ENCODE measurements at regions of chr2 and their contacts with region 1.

Region 1: DNA sequence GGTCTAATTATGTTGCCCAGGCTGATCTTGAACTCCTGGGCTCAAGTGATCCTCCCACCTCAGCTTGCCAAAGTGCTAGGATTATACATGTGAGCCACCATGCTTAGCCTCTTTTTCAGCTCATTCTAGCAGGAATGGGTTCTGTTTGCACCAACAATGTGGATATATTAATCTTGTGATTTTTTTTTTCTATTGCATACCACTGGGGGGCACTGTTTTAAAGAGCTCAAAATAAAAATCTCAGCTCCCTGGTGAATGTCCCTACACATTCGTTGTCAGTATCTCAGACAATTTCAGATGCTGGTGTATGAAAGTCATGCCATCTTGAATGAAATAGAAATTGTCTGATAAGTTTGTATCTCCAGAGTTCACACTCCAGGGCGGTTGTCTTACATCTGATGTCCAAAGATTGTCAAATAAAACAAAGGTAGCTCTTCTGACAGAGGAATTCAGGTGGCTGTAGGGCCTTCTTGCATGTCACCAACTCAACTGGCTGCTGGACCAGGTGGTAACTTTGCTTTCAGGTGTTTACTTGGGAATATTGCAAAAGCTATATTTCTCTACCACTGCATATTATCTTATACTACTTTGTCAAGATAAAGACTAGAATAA is 3.1 kb upstream of the MATN3 start:
- DNase-seq: peak; percentile 75
- ATAC-seq: no peak
- H3K4me3 ChIP-seq: no peak overlapping the region
- H3K27ac ChIP-seq: no peak overlapping the region
- H3K4me1 ChIP-seq: peaks cover 57% of the 10 kb centered on the region
- H3K27me3 ChIP-seq: no peaks in the 10 kb centered on the region; a peak in 1 of 5 replicates
- CTCF ChIP-seq: peak; percentile 73
- EP300 ChIP-seq: no peak
- POLR2A ChIP-seq: no peak
- RAD21 ChIP-seq: peak; percentile 70

Region 2: GRCh38 chr2:19955544-19956422 is 59.8 kb before region 1 on chr2:
- CTCF ChIA-PET with region 1: interaction called, 12 read pairs
- POLR2A ChIA-PET with region 1: no interaction called
- in situ Hi-C with region 1: no loop called
- intact Hi-C with region 1: loop called (anchors 1 kb)
- DNase-seq: peak; percentile 79
- ATAC-seq: peak; percentile 99
- H3K4me3 ChIP-seq: no peak overlapping the region
- H3K27ac ChIP-seq: no peak overlapping the region
- H3K4me1 ChIP-seq: no peaks in the 10 kb centered on the region
- H3K27me3 ChIP-seq: no peaks in the 10 kb centered on the region
- CTCF ChIP-seq: peak; percentile 92
- EP300 ChIP-seq: no peak
- POLR2A ChIP-seq: no peak
- RAD21 ChIP-seq: peak; percentile 92

Region 3: DNA sequence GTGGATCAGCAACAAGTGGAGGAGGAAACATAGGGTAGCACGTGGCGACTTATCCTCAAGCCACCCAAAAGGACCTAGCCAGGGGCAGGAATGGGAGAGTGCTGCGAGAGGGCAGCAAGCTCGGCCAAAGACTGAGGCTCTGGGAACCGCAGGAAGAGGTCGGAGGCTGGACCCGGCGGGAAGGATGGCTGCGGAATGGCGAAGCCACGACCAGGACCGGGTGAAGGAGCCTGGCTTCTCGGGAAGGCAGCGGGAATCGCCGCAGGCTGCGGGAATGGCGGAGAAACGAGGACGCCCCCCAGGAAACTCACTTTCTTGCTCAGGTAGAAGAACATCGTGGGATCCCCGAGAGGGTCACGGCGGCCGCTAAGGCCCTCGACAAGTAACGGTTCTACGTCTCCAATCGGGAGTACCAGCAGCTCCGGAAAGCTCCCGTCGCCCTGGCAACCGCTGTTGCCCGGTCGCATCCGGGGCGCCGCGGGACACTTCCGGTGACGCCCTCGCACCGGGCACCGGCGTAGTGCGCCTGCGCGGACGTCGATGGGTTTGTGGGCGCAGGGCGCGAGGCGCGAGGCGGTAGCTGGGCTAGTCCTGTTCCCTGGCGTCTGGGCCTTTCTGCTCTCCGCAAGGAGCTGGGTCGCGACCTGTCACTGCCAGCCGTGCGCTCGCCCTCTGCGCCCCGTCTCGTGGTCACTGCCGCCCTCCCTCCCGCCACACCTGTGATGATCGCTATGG is 25.7 kb before region 1 on chr2 and contains the start of gene WDR35:
- CTCF ChIA-PET with region 1: no interaction called
- POLR2A ChIA-PET with region 1: interaction called, 10 read pairs
- in situ Hi-C with region 1: no loop called
- intact Hi-C with region 1: loop called (anchors 1 kb)
- DNase-seq: peak; percentile 90
- ATAC-seq: peak; percentile 97
- H3K4me3 ChIP-seq: peak within 1 kb of the TSS; percentile 75 to 90 (median 78)
- H3K27ac ChIP-seq: peak within 1 kb of the TSS; percentile 70
- H3K4me1 ChIP-seq: peaks cover 30% of the 10 kb centered on the region
- H3K27me3 ChIP-seq: no peaks in the 10 kb centered on the region; a peak in 1 of 5 replicates
- CTCF ChIP-seq: peak; percentile 42
- EP300 ChIP-seq: peak in 1 of 2 experiments; percentile 9; a peak in 1 of 4 replicates
- POLR2A ChIP-seq: peak; percentile 88 to 99
- RAD21 ChIP-seq: peak; percentile 18; the same call in 1 of the 2 replicates
- total RNA-seq, gene WDR35: 19.6 and 26.6 TPM in 2 replicates

Measured in HepG2 (cell line).